Thyroid gland (tissue), 4 donors: ENCODE measurements at regions of chr10 and their contacts with region 1.

Region 1: DNA sequence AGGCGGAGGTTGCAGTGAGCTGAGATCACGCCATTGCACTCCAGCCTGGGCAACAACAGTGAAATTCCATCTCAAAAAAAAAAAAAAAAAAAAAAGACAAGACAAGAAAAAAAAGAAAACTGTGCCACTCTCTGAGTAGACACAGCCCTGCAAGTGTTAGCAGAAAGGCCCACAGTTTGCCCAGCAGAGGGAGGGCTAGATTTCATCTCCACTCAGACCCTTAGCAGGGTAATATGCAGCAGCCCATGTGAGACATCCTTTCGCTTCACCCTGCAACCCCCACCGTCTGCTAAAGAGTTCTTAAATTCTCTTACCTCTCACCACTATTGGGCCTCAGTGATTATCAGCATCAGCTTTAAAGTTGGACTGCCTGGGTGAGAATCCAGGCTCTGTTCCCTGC is 38.2 kb downstream of the CTNNA3 start:
- DNase-seq: no peak
- H3K4me3 ChIP-seq: no peak overlapping the region
- H3K27ac ChIP-seq: no peak overlapping the region
- H3K4me1 ChIP-seq: no peaks in the 10 kb centered on the region
- H3K27me3 ChIP-seq: no peaks in the 10 kb centered on the region
- CTCF ChIP-seq: no peak
- POLR2A ChIP-seq: no peak

Region 2: GRCh38 chr10:67612577-67613537 is 44.9 kb before region 1 on chr10:
- intact Hi-C with region 1: no loop called
- DNase-seq: no peak
- H3K4me3 ChIP-seq: no peak overlapping the region
- H3K27ac ChIP-seq: no peak overlapping the region
- H3K4me1 ChIP-seq: no peaks in the 10 kb centered on the region
- H3K27me3 ChIP-seq: no peaks in the 10 kb centered on the region
- CTCF ChIP-seq: no peak
- POLR2A ChIP-seq: no peak

Region 3: DNA sequence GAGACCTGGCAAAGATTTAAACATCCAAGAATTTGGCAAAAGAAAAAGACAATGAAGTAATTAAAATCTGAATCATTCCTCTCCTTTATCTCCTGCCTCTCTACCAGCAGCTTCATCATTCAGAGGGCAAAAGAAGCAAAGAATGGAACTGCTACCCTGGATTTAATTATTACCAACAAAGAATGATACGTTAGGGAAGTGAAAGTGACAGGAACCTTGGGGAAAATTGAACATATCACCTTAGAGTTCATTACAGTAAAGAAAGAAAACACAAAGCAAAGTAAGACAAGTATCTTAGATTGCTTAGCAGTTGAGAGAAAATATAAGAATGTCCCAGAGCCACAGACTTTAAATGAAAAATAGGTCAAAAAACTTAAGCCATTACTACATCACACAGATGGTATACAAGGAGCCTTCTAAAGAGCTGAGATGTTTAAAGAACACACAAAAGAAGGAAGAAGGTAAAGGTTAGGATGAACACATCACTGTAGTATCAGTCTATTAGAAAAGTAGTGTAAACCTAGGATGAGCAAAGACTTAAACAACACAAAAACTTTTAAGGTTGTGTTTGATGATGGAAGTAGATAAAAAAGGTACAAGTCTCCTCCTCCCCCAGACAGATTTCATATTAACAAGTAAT is 20.7 kb after region 1 on chr10:
- intact Hi-C with region 1: loop called (anchors 2 kb)
- DNase-seq: no peak
- H3K4me3 ChIP-seq: no peak overlapping the region
- H3K27ac ChIP-seq: no peak overlapping the region
- H3K4me1 ChIP-seq: no peaks in the 10 kb centered on the region
- H3K27me3 ChIP-seq: no peaks in the 10 kb centered on the region
- CTCF ChIP-seq: no peak
- POLR2A ChIP-seq: no peak